Caco-2 (cell line): ENCODE measurements at regions of chr9 and their contacts with region 1.

Region 1: DNA sequence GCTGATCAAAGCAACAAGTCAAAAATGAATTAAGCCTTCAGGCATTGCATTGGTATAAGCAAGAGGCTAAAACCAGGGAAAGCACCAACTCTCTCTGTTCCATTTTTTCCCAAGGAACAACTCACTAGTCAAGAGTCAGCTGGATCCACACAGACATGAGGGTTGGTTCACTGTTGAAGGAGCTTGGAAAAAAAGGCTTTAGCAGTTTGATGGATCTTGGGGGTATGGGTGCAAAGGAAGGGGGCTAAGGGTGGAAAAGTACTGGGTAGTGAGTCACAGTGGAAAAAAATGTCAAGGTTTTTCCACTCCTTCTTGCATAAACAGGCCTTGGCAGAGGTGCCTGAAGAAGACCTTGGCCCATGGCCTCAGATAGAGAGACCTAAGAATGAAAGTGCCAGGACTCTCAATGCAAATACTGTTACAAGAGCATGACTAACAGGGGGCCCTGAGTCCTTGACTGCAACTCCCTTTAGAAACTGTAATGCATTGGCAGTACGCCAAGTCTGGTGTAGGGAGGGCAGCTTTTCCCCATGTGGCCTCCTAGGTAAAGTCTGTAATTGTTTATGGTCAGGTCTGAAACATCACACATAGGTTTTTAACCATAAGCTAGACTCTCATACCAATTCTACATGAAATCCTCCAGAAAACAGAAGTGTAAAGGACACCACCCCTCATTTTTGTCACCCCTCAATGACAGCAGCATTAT is 23.7 kb downstream of the ACTL7A start:
- DNase-seq: peak in 1 of 2 experiments; percentile 11
- H3K4me3 ChIP-seq: no peak overlapping the region
- H3K4me3 Mint-ChIP-seq: no peak overlapping the region
- H3K27ac Mint-ChIP-seq: no peak overlapping the region
- H3K4me1 ChIP-seq: no peaks in the 10 kb centered on the region
- H3K4me1 Mint-ChIP-seq: no peaks in the 10 kb centered on the region
- H3K27me3 ChIP-seq: no peaks in the 10 kb centered on the region
- H3K27me3 Mint-ChIP-seq: no peaks in the 10 kb centered on the region
- CTCF ChIP-seq: no peak

Region 2: DNA sequence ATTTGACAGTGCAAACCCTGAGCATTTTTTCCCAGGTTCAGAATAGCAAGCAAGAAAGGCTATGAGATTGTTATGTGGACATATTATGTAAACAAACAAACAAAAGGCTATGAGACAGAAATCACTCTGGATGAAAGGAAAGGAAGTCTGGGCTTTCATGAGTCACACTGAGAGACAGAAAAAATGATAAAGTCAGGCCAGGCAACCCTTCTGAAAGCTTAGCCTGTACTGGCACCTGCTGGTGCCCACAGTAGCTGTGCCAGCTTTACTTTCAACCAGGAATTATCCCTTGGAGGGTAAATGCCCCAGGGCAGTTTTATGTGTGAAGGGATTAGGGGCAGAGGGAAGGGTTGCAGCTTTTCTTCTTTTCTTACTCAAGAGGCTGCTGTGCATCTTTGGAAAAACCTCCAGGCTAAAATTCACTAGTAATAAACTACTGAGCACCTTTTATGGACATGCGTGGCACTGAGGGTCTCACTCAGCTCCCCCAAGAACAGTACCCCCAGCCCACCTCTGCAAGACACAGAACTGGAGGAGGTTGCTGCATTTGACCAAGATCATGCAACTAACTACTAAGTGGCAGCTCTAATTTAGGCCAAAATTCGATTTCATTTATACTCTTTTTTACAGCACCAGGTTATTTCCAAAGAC is 71.7 kb before region 1 on chr9:
- CTCF ChIA-PET with region 1: no interaction called
- POLR2A ChIA-PET with region 1: no interaction called
- intact Hi-C with region 1: no loop called
- DNase-seq: no peak
- H3K4me3 ChIP-seq: no peak overlapping the region
- H3K4me3 Mint-ChIP-seq: no peak overlapping the region
- H3K27ac Mint-ChIP-seq: no peak overlapping the region
- H3K4me1 ChIP-seq: no peaks in the 10 kb centered on the region
- H3K4me1 Mint-ChIP-seq: no peaks in the 10 kb centered on the region
- H3K27me3 ChIP-seq: no peaks in the 10 kb centered on the region; the same call in 1 of the 2 replicates
- H3K27me3 Mint-ChIP-seq: peaks cover 13% of the 10 kb centered on the region
- CTCF ChIP-seq: no peak

Region 3: DNA sequence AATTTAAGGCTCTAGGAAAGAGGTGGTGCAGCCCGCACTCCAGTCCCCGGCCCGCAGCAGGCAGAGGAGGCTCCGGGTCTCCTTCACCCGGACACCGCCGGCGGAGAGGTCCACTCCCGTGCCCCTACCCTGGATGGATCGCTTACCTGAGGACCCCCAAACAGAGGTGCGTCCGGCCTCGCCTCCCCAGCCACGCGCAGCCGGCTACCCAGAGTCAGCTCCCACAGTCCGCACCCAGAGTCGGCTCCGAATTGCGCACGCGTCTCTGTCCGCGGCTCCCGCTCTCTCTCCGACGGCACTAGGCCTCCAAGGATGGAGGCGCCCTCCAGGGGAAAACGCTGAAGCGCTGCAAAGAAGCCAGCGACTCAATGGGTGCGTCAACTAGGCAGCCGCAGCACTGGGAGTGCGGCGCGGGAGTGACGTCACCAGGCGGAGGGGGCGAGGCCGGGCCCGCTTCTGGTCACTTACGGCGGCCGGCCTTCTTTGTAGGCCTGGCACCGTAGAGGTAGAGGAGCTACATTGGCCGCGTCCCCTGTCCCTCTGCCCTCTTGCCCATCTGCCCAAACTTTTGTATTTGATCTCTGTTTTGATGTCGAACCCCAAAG is 48.0 kb after region 1 on chr9 and contains the start of gene ELP1:
- CTCF ChIA-PET with region 1: interaction called, 3 read pairs
- POLR2A ChIA-PET with region 1: no interaction called
- intact Hi-C with region 1: loop called (anchors 5 kb)
- DNase-seq: peak; percentile 95
- H3K4me3 ChIP-seq: peak within 1 kb of the TSS; percentile 98
- H3K4me3 Mint-ChIP-seq: peak within 1 kb of the TSS; percentile 93
- H3K27ac Mint-ChIP-seq: peak within 1 kb of the TSS; percentile 91
- H3K4me1 ChIP-seq: peaks cover 9% of the 10 kb centered on the region
- H3K4me1 Mint-ChIP-seq: peaks cover 16% of the 10 kb centered on the region
- H3K27me3 ChIP-seq: no peaks in the 10 kb centered on the region
- H3K27me3 Mint-ChIP-seq: no peaks in the 10 kb centered on the region
- CTCF ChIP-seq: peak in 1 of 2 experiments; percentile 38
- total RNA-seq, gene ELP1: 27.6 and 29.1 TPM in 2 replicates

Region 4: DNA sequence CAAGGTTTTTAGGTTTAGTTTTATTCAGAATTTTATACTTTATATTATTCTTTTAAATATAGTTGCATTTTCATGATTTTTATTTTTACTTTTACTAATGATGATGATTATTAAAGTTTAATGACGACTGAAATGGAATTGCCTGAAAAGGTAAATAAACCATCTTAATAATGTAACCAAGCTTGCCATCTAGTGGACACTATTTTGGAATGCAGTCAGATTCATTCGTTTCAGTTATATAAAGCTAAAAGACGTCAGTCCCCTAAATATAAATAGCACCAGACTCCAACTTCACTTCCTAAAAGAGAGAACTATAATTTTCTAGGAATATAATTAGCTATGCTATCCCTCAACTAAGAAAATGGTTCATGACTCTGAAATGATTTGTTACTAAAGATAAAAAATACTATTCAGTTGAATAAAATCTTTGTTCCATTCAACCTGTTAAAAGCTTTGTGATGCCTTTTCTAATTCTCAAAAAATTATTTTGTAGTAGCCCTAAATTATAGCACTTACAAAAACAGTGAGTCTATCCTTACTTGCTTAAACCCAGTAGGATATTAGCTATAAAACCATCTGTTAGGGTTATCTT is 68.3 kb after region 1 on chr9:
- CTCF ChIA-PET with region 1: interaction called, 9 read pairs
- POLR2A ChIA-PET with region 1: no interaction called
- intact Hi-C with region 1: loop called (anchors 1 kb)
- DNase-seq: peak in 1 of 2 experiments; percentile 15
- H3K4me3 ChIP-seq: no peak overlapping the region
- H3K4me3 Mint-ChIP-seq: no peak overlapping the region
- H3K27ac Mint-ChIP-seq: no peak overlapping the region
- H3K4me1 ChIP-seq: no peaks in the 10 kb centered on the region
- H3K4me1 Mint-ChIP-seq: no peaks in the 10 kb centered on the region
- H3K27me3 ChIP-seq: no peaks in the 10 kb centered on the region
- H3K27me3 Mint-ChIP-seq: no peaks in the 10 kb centered on the region
- CTCF ChIP-seq: peak; percentile 53 to 62